IMR-90 (cell line): ENCODE measurements at regions of chr13 and their contacts with region 1.

Region 1: DNA sequence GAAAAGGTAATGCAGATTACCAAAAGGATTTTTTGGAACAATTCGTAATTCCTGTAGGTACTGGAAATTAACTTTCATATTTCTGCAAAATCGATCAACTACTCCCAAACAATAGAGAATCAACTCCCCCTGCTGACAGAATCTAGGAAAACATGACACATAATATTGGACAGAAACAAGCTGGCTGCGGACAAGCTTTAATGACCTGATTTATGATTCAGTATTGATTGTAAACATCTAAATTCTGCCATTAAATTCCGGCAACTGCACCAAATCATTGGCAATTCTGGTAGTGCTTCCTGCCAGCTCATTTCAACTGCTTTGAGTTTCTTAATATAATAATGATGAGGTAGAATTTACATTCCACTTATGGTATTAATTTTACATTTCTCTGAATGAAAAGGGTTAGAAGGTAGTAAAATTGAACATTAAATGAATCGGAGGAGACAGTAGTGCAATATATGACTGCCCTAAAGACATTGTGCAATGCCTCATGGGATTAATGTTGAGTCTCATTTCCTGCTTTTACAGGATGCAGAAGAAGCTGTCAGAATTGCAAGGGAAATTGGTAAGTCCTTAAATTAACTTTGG is 146.5 kb downstream of the PCCA start:
- DNase-seq: peak; percentile 63
- ATAC-seq: 0 out of 2 replicates have a peak, but pooled peaks have one; percentile 42
- H3K4me3 ChIP-seq: no peak overlapping the region
- H3K27ac ChIP-seq: no peak overlapping the region
- H3K4me1 ChIP-seq: peaks cover 4% of the 10 kb centered on the region
- H3K27me3 ChIP-seq: no peaks in the 10 kb centered on the region
- CTCF ChIP-seq: peak; percentile 75
- POLR2A ChIP-seq: no peak
- RAD21 ChIP-seq: peak; percentile 80

Region 2: DNA sequence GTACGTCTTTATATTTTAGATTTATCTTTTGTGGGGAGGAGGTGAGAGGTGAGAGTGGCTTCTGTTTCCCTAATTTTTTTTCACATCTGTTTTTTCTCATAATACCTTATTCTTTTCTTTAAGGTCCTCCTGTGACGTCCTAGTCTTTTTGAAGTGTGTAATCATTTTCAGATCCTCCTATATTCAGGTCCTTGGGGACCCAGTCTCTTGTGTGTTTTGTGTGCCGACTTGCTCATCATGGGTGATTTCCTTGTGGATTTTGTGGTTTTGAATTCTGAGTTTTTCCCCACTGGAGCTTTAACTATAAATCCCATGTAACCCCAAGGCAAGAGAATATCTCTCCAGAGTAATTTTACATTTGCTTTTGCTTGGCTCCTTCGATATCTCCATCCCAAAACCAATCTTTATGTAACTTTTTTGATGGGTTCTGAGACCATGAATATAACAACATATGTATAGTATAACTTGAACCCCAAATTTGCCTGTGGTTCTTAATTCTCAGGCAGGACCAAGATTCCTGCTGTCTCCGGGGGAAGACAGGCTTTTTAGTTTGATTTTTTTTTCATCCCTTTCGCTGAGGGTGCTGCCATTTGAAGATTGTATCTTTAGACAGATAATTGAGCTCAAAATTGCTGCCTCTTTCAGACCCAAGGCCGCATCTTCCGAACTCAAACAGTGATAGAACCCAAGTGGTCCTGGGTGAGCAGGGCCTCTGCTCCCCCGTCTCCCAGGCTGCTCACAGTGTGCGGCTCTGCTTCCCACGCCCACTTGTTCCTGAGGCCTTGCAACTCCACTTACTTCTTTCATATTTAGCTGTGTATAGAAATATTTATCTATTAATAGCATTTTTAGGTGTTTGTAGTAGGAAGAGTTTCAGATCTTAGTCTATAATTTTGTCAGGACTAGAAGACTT is 869.1 kb before region 1 on chr13:
- CTCF ChIA-PET with region 1: no interaction called
- POLR2A ChIA-PET with region 1: no interaction called
- dilution Hi-C with region 1: no loop called
- in situ Hi-C with region 1: no loop called
- intact Hi-C with region 1: no loop called
- DNase-seq: no peak
- ATAC-seq: no peak
- H3K4me3 ChIP-seq: no peak overlapping the region
- H3K27ac ChIP-seq: no peak overlapping the region
- H3K4me1 ChIP-seq: peaks cover under 1% of the 10 kb centered on the region; the same call in 1 of the 2 replicates
- H3K27me3 ChIP-seq: no peaks in the 10 kb centered on the region
- CTCF ChIP-seq: no peak
- POLR2A ChIP-seq: no peak
- RAD21 ChIP-seq: no peak

Region 3: DNA sequence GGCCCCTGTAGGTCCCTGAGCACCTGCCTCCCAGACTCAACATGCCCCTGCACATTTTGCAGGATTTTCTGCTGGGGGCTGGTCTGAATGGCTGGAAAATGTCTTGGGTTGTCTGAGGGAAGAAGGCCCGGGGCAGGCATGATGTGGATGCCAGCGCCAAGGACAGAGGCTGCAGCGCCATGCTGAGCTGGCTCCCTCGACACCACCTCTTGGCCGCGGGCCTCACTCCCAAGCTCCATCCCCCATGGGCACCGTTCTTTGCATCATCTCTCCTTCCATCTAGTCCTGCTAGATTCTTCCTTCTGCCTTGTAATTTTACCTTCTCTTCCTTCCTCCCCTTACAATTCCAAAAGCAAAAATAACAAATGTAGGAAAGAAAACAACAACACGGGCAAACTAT is 334.4 kb before region 1 on chr13:
- CTCF ChIA-PET with region 1: interaction called, 3 read pairs
- POLR2A ChIA-PET with region 1: no interaction called
- dilution Hi-C with region 1: no loop called
- in situ Hi-C with region 1: no loop called
- intact Hi-C with region 1: loop called (anchors 5 kb)
- DNase-seq: no peak
- ATAC-seq: no peak
- H3K4me3 ChIP-seq: no peak overlapping the region
- H3K27ac ChIP-seq: no peak overlapping the region
- H3K4me1 ChIP-seq: no peaks in the 10 kb centered on the region
- H3K27me3 ChIP-seq: peaks cover 36% of the 10 kb centered on the region
- CTCF ChIP-seq: no peak
- POLR2A ChIP-seq: no peak
- RAD21 ChIP-seq: no peak

Region 4: DNA sequence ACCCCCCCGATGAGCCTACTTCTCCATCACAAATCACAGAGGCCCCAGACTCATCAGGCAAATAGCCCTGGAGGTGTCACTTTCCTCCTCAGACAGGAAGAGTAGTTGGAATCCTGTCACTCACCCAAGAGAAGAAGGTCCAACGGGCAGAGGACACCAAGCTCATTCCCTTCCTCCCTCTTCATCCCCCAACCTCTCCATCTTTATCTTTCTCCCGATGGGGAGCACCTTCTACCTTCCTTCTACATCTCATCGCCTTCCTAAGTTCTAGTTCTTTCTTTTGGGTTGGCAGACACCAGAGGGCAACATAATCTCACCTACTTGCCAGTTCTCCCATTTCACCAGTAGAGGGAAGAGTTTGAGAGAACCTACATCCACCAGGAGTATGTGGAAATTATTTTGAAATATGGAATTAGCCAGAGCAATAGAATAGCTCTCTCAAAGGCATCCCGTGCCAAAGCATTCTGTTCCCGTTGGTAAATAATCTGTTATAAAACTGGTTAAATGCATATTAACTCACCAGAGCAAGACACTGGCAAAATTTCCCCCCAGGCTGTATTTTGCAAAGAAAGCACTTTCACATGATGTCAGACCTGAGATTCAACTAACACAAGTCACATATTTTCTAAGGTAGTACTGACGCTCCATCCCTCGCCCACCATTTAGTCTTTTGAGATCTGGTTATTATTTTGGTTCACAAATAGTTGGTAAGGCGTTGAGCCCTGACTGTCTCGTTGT is 318.9 kb before region 1 on chr13:
- CTCF ChIA-PET with region 1: interaction called, 5 read pairs
- POLR2A ChIA-PET with region 1: no interaction called
- dilution Hi-C with region 1: no loop called
- in situ Hi-C with region 1: loop called (anchors 5 kb)
- intact Hi-C with region 1: loop called (anchors 1 kb)
- DNase-seq: peak; percentile 71
- ATAC-seq: peak; percentile 89
- H3K4me3 ChIP-seq: no peak overlapping the region
- H3K27ac ChIP-seq: no peak overlapping the region
- H3K4me1 ChIP-seq: no peaks in the 10 kb centered on the region
- H3K27me3 ChIP-seq: peaks cover 24% of the 10 kb centered on the region
- CTCF ChIP-seq: peak; percentile 100
- POLR2A ChIP-seq: no peak
- RAD21 ChIP-seq: peak; percentile 79

Region 5: GRCh38 chr13:99980201-99980823 is 255.1 kb before region 1 on chr13:
- CTCF ChIA-PET with region 1: no interaction called
- POLR2A ChIA-PET with region 1: no interaction called
- dilution Hi-C with region 1: no loop called
- in situ Hi-C with region 1: loop called (anchors 10 kb)
- intact Hi-C with region 1: loop called (anchors 5 kb)
- DNase-seq: peak; percentile 43
- ATAC-seq: peak; percentile 91
- H3K4me3 ChIP-seq: peak overlapping the region; percentile 11; the same call in 1 of the 2 replicates
- H3K27ac ChIP-seq: no peak overlapping the region
- H3K4me1 ChIP-seq: no peaks in the 10 kb centered on the region; the same call in 1 of the 2 replicates
- H3K27me3 ChIP-seq: peaks cover 90% of the 10 kb centered on the region
- CTCF ChIP-seq: no peak
- POLR2A ChIP-seq: no peak
- RAD21 ChIP-seq: no peak

Region 6: GRCh38 chr13:100039740-100040139 is 195.7 kb before region 1 on chr13:
- CTCF ChIA-PET with region 1: no interaction called
- POLR2A ChIA-PET with region 1: no interaction called
- dilution Hi-C with region 1: no loop called
- in situ Hi-C with region 1: no loop called
- intact Hi-C with region 1: loop called (anchors 2 kb)
- DNase-seq: peak; percentile 3
- ATAC-seq: no peak
- H3K4me3 ChIP-seq: no peak overlapping the region
- H3K27ac ChIP-seq: no peak overlapping the region
- H3K4me1 ChIP-seq: no peaks in the 10 kb centered on the region
- H3K27me3 ChIP-seq: no peaks in the 10 kb centered on the region
- CTCF ChIP-seq: no peak
- POLR2A ChIP-seq: no peak
- RAD21 ChIP-seq: no peak

Region 7: DNA sequence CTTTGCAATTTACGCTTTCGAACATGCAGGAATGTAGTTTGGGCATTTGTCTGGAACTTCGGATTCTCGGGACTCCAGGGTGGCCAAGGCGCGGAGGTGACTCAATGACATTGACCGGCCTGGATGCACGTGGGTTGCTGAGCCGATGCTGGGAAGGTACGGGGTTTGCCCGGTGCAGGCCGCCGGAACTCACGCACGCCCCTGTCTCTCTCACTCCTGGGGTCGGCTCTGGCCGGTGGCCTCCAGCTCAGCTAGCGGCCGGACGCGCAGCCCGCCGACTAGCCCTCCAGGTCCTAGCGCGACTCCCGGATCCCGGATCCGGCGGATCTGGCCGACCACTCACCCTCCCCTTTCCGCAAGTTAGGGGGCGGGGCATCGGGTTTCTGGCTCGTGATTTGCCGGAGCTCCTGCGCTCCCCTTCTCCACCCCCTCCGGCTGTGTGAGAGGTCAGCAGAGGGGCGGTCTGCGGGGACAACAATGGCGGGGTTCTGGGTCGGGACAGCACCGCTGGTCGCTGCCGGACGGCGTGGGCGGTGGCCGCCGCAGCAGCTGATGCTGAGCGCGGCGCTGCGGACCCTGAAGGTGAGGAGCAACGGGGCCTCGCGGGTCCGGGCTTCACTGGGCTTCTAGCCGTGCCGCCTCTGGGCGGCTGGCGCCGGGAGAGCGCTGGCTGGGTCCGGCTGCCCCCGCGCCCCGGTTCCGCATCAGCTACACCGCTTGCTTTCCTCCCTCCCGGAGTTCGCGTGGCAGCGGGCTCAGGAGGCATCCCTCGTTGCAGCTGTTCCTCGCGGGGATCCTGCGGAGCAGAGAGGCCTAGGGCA is 146.6 kb before region 1 on chr13 and contains the start of gene PCCA:
- CTCF ChIA-PET with region 1: interaction called, 3 read pairs
- POLR2A ChIA-PET with region 1: interaction called, 6 read pairs
- dilution Hi-C with region 1: no loop called
- in situ Hi-C with region 1: no loop called
- intact Hi-C with region 1: loop called (anchors 5 kb)
- DNase-seq: peak; percentile 89
- ATAC-seq: peak; percentile 98
- H3K4me3 ChIP-seq: peak within 1 kb of the TSS; percentile 75
- H3K27ac ChIP-seq: peak within 1 kb of the TSS; percentile 87
- H3K4me1 ChIP-seq: peaks cover 2% of the 10 kb centered on the region
- H3K27me3 ChIP-seq: no peaks in the 10 kb centered on the region
- CTCF ChIP-seq: no peak
- POLR2A ChIP-seq: no peak
- RAD21 ChIP-seq: 0 out of 2 replicates have a peak, but pooled peaks have one; percentile 6
- total RNA-seq, gene PCCA: 22.8 and 24.0 TPM in 2 replicates

Region 8: GRCh38 chr13:100573121-100573520 is 337.7 kb after region 1 on chr13:
- CTCF ChIA-PET with region 1: no interaction called
- POLR2A ChIA-PET with region 1: no interaction called
- dilution Hi-C with region 1: no loop called
- in situ Hi-C with region 1: no loop called
- intact Hi-C with region 1: no loop called
- DNase-seq: peak; percentile 82
- ATAC-seq: peak; percentile 90
- H3K4me3 ChIP-seq: no peak overlapping the region
- H3K27ac ChIP-seq: no peak overlapping the region
- H3K4me1 ChIP-seq: no peaks in the 10 kb centered on the region
- H3K27me3 ChIP-seq: no peaks in the 10 kb centered on the region
- CTCF ChIP-seq: peak; percentile 70
- POLR2A ChIP-seq: no peak
- RAD21 ChIP-seq: peak; percentile 63